ENCODE measurements at regions of chr13 and their contacts with region 1.

Region 1: GRCh38 chr13:33125821-33126570 is 109.8 kb downstream of the KL start:
- DNase-seq: peak; percentile 76
- ATAC-seq: peak; percentile 85 to 95

Region 2: GRCh38 chr13:32997399-32997798 is 128.6 kb before region 1 on chr13:
- intact Hi-C with region 1: no loop called
- DNase-seq: no peak
- ATAC-seq: no peak

Region 3: GRCh38 chr13:33174931-33175330 is 48.9 kb after region 1 on chr13:
- intact Hi-C with region 1: loop called in 1 of 2 experiments (anchors 10 kb)
- DNase-seq: no peak
- ATAC-seq: no peak